Pancreas (tissue), 10 donors: ENCODE measurements at regions of chr11 and their contacts with region 1.

Region 1: GRCh38 chr11:62421996-62422395 is 3.2 kb downstream of the SCGB1A1 start:
- DNase-seq: peak in 1 of 6 donors; percentile 12
- ATAC-seq: no peak
- H3K4me3 ChIP-seq: no peak overlapping the region
- H3K27ac ChIP-seq: no peak overlapping the region
- H3K4me1 ChIP-seq: no peaks in the 10 kb centered on the region
- H3K27me3 ChIP-seq: no peaks in the 10 kb centered on the region
- CTCF ChIP-seq: no peak

Region 2: DNA sequence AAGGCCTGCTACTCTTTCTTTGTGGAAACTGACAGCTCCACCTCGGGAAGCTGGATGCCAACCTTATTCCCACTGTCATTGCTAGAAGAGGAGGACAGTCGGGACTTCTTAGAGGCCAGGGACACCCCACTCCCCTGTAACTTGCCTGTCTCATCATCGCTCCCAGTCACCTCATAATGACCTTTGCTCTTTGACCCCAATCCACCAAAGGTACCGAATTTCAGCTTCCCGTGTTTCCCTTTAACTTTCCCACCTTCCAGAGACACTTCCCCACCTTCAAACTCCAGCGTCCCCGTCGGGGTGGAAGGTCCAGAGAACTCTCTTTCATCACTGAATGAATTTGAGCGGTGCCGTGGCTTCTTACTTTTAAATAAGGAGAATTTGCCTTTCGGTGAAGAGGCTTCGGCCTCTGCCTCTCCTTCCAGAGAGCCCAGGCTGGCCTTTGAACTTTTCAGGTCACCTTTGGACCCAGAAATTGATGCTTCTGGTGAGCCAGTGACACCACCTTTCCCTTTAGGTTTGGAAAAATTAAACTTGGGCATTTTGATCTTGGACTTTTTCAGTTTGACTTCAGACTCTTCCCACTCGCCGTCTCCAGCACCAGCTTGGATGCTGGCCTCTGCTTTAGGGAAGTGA is 94.9 kb after region 1 on chr11:
- intact Hi-C with region 1: no loop called
- DNase-seq: no peak
- ATAC-seq: no peak
- H3K4me3 ChIP-seq: no peak overlapping the region
- H3K27ac ChIP-seq: no peak overlapping the region
- H3K4me1 ChIP-seq: no peaks in the 10 kb centered on the region
- H3K27me3 ChIP-seq: no peaks in the 10 kb centered on the region
- CTCF ChIP-seq: no peak

Region 3: GRCh38 chr11:62545437-62546243 is 123.6 kb after region 1 on chr11:
- intact Hi-C with region 1: loop called in 1 of 3 experiments (anchors 5 kb)
- DNase-seq: peak; percentile 80 to 93 (median 91)
- ATAC-seq: peak; percentile 52 to 61 (median 56)
- H3K4me3 ChIP-seq: peak overlapping the region; percentile 43 to 97 (median 86)
- H3K27ac ChIP-seq: peak overlapping the region; percentile 77 to 93 (median 87)
- H3K4me1 ChIP-seq: peaks cover 29 to 50% (median 35%) of the 10 kb centered on the region in 3 donors
- H3K27me3 ChIP-seq: no peaks in the 10 kb centered on the region
- CTCF ChIP-seq: no peak